ENCODE measurements at regions of chr1 and their contacts with region 1.

Region 1: GRCh38 chr1:156114101-156114916 is at the start of gene LMNA:
- DNase-seq: peak; percentile 85
- H3K4me3 ChIP-seq: peak within 1 kb of the TSS; percentile 100
- H3K27ac ChIP-seq: peak within 1 kb of the TSS; percentile 93
- H3K27me3 ChIP-seq: no peaks in the 10 kb centered on the region
- CTCF ChIP-seq: no peak
- polyA plus RNA-seq, gene LMNA: 365 and 382 TPM in 2 replicates

Region 2: GRCh38 chr1:156096640-156097391 is 17.5 kb before region 1 on chr1:
- CTCF ChIA-PET with region 1: interaction called, 682 read pairs
- POLR2A ChIA-PET with region 1: interaction called, 25 read pairs
- DNase-seq: peak; percentile 67
- H3K4me3 ChIP-seq: no peak overlapping the region
- H3K27ac ChIP-seq: peak overlapping the region; percentile 47
- H3K27me3 ChIP-seq: no peaks in the 10 kb centered on the region
- CTCF ChIP-seq: peak; percentile 98

Region 3: GRCh38 chr1:156104065-156104810 is 10.1 kb before region 1 on chr1:
- CTCF ChIA-PET with region 1: interaction called, 682 read pairs
- POLR2A ChIA-PET with region 1: interaction called, 25 read pairs
- DNase-seq: no peak
- H3K4me3 ChIP-seq: peak overlapping the region; percentile 7; the same call in 1 of the 2 replicates
- H3K27ac ChIP-seq: peak overlapping the region; percentile 61
- H3K27me3 ChIP-seq: no peaks in the 10 kb centered on the region
- CTCF ChIP-seq: no peak

Region 4: GRCh38 chr1:156146020-156146768 is 31.9 kb after region 1 on chr1:
- CTCF ChIA-PET with region 1: interaction called, 3 read pairs
- POLR2A ChIA-PET with region 1: interaction called, 11 read pairs
- DNase-seq: peak; percentile 86
- H3K4me3 ChIP-seq: no peak overlapping the region
- H3K27ac ChIP-seq: no peak overlapping the region
- H3K27me3 ChIP-seq: peaks cover 13% of the 10 kb centered on the region
- CTCF ChIP-seq: peak; percentile 64

Region 5: GRCh38 chr1:156172696-156173470 is 58.6 kb after region 1 on chr1:
- CTCF ChIA-PET with region 1: no interaction called
- POLR2A ChIA-PET with region 1: no interaction called
- DNase-seq: no peak
- H3K4me3 ChIP-seq: no peak overlapping the region
- H3K27ac ChIP-seq: no peak overlapping the region
- H3K27me3 ChIP-seq: peaks cover 12% of the 10 kb centered on the region
- CTCF ChIP-seq: peak; percentile 12; the same call in 1 of the 2 replicates

Region 6: GRCh38 chr1:156276966-156277381 is 162.7 kb after region 1 on chr1:
- CTCF ChIA-PET with region 1: no interaction called
- POLR2A ChIA-PET with region 1: interaction called, 10 read pairs
- DNase-seq: no peak
- H3K4me3 ChIP-seq: no peak overlapping the region
- H3K27ac ChIP-seq: no peak overlapping the region
- H3K27me3 ChIP-seq: no peaks in the 10 kb centered on the region
- CTCF ChIP-seq: no peak

Region 7: DNA sequence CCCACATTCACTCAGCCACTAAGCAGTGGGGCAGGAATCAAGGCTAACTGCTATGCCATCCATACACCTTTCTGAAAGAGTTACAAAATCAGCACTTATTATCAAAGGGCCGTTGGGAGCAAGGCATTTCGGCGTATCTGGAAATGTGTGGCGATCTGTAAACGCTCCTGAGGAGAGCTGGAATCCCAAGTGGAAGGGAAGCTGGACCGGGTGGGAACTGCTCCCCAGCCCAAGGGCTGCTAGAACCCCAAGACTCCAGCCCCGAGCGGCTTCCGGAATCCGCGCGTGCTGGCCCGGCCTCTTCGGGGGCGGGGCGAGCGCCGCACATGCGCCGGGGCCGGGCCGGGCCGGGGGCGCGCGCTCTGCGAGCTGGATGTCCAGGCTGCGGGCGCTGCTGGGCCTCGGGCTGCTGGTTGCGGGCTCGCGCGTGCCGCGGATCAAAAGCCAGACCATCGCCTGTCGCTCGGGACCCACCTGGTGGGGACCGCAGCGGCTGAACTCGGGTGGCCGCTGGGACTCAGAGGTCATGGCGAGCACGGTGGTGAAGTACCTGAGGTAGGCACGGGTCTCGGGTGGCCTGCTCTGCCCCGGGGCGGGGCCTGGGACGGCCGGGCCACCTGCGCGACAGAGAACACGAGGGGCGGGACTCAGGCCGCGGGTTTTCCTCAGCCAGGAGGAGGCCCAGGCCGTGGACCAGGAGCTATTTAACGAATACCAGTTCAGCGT is 477.3 kb after region 1 on chr1 and contains the start of gene NAXE:
- CTCF ChIA-PET with region 1: no interaction called
- POLR2A ChIA-PET with region 1: no interaction called
- DNase-seq: no peak
- H3K4me3 ChIP-seq: peak within 1 kb of the TSS; percentile 84
- H3K27ac ChIP-seq: peak within 1 kb of the TSS; percentile 31
- H3K27me3 ChIP-seq: no peaks in the 10 kb centered on the region
- CTCF ChIP-seq: no peak
- polyA plus RNA-seq, gene NAXE: 29.9 and 38.7 TPM in 2 replicates